Ascending aorta (tissue), 2 donors: ENCODE measurements at regions of chr5 and their contacts with region 1.

Region 1: GRCh38 chr5:17132444-17133083 is 84.9 kb upstream of the BASP1 start:
- DNase-seq: no peak
- H3K4me3 ChIP-seq: no peak overlapping the region
- H3K27ac ChIP-seq: no peak overlapping the region
- H3K4me1 ChIP-seq: peaks cover 0 to 11% of the 10 kb centered on the region in 2 donors
- H3K27me3 ChIP-seq: no peaks in the 10 kb centered on the region
- CTCF ChIP-seq: peak; percentile 31 to 66 (median 49)

Region 2: DNA sequence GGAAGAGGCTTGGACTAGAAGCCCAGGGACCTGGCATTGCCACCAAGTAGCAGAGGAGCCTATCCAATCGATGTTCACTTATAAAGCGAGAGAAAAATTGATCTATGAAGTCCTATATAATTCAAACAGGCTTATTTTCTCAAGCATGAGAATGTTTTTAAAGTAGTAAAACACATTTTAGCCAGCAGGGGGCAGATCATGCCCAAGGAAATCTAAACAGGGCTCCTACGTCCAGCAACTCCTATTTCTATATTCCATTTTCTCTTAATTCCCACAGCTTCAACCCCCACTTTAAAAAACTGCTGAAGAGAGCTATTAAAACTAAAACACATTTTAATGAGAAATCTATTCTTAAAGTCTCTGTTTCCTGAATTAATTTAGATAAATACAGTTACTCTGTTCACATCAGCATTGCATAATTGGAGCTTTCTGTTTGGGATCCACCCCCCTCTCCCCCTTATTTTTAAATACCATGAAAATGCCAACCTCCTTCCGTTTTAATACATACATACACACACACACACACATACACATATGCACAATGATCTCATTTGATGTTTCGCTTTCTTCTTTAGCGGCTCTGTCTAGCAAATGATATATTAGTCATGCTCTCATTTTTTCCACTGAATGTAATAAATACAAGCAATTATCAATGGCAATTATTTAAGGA is 341.4 kb before region 1 on chr5:
- intact Hi-C with region 1: loop called (anchors 5 kb)
- DNase-seq: no peak
- H3K4me3 ChIP-seq: no peak overlapping the region
- H3K27ac ChIP-seq: no peak overlapping the region
- H3K4me1 ChIP-seq: no peaks in the 10 kb centered on the region
- H3K27me3 ChIP-seq: no peaks in the 10 kb centered on the region
- CTCF ChIP-seq: peak; percentile 53 to 69 (median 56)

Region 3: GRCh38 chr5:16809395-16810207 is 323.0 kb before region 1 on chr5:
- intact Hi-C with region 1: loop called (anchors 5 kb)
- DNase-seq: no peak
- H3K4me3 ChIP-seq: no peak overlapping the region
- H3K27ac ChIP-seq: no peak overlapping the region
- H3K4me1 ChIP-seq: peaks cover 0 to 4% of the 10 kb centered on the region in 2 donors
- H3K27me3 ChIP-seq: no peaks in the 10 kb centered on the region
- CTCF ChIP-seq: no peak

Region 4: DNA sequence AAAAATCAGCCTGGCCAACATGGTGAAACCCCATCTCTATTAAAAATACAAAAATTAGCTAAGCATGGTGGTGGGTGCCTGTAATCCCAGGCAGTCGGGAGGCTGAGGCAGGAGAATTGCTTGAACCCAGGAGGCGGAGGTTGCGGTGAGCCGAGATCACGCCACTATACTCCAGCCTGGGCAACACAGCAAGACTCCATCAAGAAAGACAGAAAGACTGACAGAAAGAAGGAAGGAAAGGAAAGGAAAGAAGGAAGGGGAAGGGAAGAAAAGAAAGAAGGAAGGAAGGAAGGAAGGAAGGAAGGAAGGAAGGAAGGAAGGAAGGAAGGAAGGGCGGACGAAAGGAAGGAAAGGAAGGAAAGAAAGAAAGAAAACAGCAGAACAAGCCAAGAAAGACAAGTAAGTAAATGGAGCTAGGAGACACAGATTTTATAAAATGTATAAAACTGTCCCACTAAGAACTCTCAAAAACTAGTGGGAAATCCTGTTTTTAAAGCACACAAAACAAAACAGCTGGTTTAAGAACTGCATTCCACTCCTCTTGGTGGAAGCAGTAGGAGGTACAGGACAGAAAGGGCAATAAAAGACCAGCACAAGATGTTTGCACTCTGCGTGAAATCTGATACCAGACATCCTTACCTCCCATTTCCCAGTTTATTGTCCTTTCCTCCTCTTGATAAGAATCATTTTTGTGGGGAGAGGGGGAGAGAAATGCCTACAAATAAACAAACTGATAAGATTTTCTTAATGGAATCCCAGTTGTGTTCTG is 243.2 kb before region 1 on chr5:
- intact Hi-C with region 1: loop called (anchors 5 kb)
- DNase-seq: no peak
- H3K4me3 ChIP-seq: no peak overlapping the region
- H3K27ac ChIP-seq: no peak overlapping the region
- H3K4me1 ChIP-seq: peaks cover 0 to 9% of the 10 kb centered on the region in 2 donors
- H3K27me3 ChIP-seq: no peaks in the 10 kb centered on the region
- CTCF ChIP-seq: no peak

Region 5: GRCh38 chr5:16936150-16936920 is 196.2 kb before region 1 on chr5 and contains the start of gene MYO10:
- intact Hi-C with region 1: loop called (anchors 2 kb)
- DNase-seq: peak in 1 of 2 donors; percentile 79
- H3K4me3 ChIP-seq: peak within 1 kb of the TSS; percentile 56 to 88
- H3K27ac ChIP-seq: peak within 1 kb of the TSS; percentile 55 to 56
- H3K4me1 ChIP-seq: no peaks in the 10 kb centered on the region
- H3K27me3 ChIP-seq: no peaks in the 10 kb centered on the region
- CTCF ChIP-seq: no peak
- total RNA-seq, gene MYO10: 20.0 TPM

Region 6: GRCh38 chr5:17012302-17012701 is 120.3 kb before region 1 on chr5:
- intact Hi-C with region 1: no loop called
- DNase-seq: no peak
- H3K4me3 ChIP-seq: no peak overlapping the region
- H3K27ac ChIP-seq: no peak overlapping the region
- H3K4me1 ChIP-seq: no peaks in the 10 kb centered on the region
- H3K27me3 ChIP-seq: no peaks in the 10 kb centered on the region
- CTCF ChIP-seq: no peak

Region 7: DNA sequence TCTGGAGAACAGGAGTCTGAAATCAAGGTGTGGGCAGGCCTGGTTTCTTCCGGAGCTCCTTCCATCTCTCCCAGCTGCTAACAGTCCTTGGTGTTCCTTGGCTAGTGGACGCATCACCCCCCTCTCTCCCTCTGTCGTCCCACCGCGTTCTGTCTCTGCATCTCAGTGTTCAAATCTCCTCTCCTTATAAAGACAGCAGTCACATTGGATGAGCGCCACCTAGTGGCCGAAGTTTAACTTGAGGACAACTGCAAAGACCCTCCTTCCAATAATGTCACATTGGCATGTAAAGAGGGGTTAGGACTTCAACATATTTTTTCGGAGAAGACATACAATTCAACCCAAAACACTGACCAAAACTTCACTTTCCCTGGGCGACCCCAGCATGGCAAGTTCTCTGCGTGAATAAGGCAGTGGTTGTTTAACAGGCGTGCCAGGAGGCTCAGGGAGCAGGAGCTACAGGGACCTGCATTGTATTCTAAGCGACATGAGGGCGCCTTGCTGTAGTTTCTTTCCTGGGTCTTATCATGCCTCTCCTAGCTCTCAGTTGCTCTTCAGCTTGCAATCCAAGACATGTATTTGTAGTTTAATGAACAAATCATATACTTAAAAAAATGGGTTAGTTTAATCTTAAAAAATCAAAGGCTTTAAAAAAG is 56.9 kb after region 1 on chr5:
- intact Hi-C with region 1: loop called (anchors 5 kb)
- DNase-seq: peak in 1 of 2 donors; percentile 81
- H3K4me3 ChIP-seq: no peak overlapping the region
- H3K27ac ChIP-seq: no peak overlapping the region
- H3K4me1 ChIP-seq: no peaks in the 10 kb centered on the region
- H3K27me3 ChIP-seq: no peaks in the 10 kb centered on the region
- CTCF ChIP-seq: peak; percentile 47 to 83 (median 72)

Region 8: GRCh38 chr5:17228821-17229291 is 96.3 kb after region 1 on chr5:
- intact Hi-C with region 1: no loop called
- DNase-seq: no peak
- H3K4me3 ChIP-seq: peak overlapping the region in 1 of 2 donors; percentile 18
- H3K27ac ChIP-seq: peak overlapping the region; percentile 65 to 66
- H3K4me1 ChIP-seq: peaks cover 0 to 13% of the 10 kb centered on the region in 2 donors
- H3K27me3 ChIP-seq: no peaks in the 10 kb centered on the region
- CTCF ChIP-seq: no peak